ENCODE measurements at regions of chr4 and their contacts with region 1.

Region 1: DNA sequence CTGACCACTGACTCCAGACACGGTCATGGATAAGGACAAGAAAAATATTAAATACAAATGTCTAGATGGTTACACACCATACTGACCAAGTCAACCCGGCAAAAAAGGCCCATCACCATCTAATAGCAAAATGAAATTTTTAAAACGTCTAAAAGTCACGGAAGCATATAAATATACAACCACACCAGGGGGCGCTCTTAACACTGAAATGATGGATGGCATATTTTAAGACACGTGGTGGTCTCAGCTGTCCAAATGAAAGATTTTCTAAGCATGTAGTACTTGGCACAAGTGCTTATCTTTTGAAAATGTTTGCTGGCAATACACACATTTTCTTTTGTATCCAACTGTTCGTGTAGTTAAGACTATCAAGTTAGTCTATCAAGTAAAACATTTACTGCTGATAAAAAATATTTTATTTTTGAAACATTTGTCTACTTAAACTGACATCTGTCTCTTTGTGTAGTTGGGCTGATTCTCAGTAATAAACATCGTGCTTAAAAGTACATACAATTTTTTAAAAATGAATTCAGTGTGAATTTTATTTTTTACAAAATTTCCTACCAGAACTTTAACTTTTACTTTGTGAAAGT is 64.6 kb downstream of the COX7B2 start:
- DNase-seq: peak; percentile 62
- H3K4me3 ChIP-seq: no peak overlapping the region
- H3K27ac ChIP-seq: no peak overlapping the region
- H3K4me1 ChIP-seq: no peaks in the 10 kb centered on the region
- H3K27me3 ChIP-seq: no peaks in the 10 kb centered on the region

Region 2: GRCh38 chr4:47383829-47384427 is 539.5 kb after region 1 on chr4:
- in situ Hi-C with region 1: loop called (anchors 25 kb)
- DNase-seq: peak; percentile 66
- H3K4me3 ChIP-seq: no peak overlapping the region
- H3K27ac ChIP-seq: no peak overlapping the region
- H3K4me1 ChIP-seq: no peaks in the 10 kb centered on the region
- H3K27me3 ChIP-seq: no peaks in the 10 kb centered on the region; the same call in 1 of the 2 replicates